IMR-90 (cell line): ENCODE measurements at regions of chr15 and their contacts with region 1.

Region 1: GRCh38 chr15:91852741-91853510 is 582 bp upstream of the SLCO3A1 start:
- DNase-seq: peak; percentile 56
- ATAC-seq: peak; percentile 83
- H3K4me3 ChIP-seq: peak overlapping the region; percentile 90
- H3K27ac ChIP-seq: peak overlapping the region; percentile 53
- H3K4me1 ChIP-seq: peaks cover 5% of the 10 kb centered on the region; the same call in 1 of the 2 replicates
- H3K27me3 ChIP-seq: no peaks in the 10 kb centered on the region; the same call in 1 of the 2 replicates
- CTCF ChIP-seq: peak; percentile 72
- POLR2A ChIP-seq: no peak
- RAD21 ChIP-seq: peak; percentile 52

Region 2: DNA sequence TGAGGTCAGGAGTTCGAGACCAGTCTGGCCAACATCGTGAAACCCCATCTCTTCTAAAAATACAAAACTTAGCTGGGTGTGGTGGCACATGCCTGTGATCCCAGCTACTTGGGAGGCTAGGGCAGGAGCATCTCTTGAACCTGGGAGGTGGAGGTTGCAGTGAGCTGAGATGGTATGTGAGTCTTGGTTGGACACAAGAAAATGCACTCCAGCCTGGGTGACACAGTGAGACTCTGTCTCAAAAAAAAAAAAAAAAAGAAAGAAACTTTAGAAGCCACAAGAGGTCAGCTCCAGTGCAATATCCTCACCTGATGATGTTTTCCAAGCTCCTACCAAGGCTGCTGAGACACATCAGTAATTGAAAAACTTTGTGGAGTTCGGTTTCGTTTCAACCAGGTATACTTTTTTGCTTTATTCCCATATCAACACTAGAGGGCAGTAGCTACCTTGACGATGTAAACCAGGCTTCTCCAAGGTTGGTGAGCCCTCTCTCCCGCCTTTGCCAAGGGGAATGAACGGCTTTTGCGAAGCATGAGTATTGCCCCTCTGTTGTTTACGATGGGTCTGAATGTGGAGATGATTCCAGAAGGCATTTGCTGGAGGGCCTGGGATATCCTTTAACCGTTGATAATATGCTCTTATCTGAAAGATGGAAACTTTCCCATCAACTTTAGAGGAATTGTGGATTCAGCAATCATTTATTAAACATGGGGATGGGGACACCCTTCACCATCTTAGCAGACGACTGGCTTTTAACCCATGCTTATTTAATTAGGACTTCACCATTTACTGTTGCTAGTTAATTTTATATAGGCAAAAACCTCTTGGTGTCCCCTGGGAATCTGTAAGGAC is 550.1 kb before region 1 on chr15:
- CTCF ChIA-PET with region 1: interaction called, 5 read pairs
- POLR2A ChIA-PET with region 1: no interaction called
- dilution Hi-C with region 1: no loop called
- in situ Hi-C with region 1: loop called (anchors 25 kb)
- intact Hi-C with region 1: loop called (anchors 1 kb)
- DNase-seq: peak; percentile 63
- ATAC-seq: peak; percentile 87
- H3K4me3 ChIP-seq: no peak overlapping the region
- H3K27ac ChIP-seq: no peak overlapping the region
- H3K4me1 ChIP-seq: no peaks in the 10 kb centered on the region
- H3K27me3 ChIP-seq: peaks cover 25% of the 10 kb centered on the region
- CTCF ChIP-seq: peak; percentile 84
- POLR2A ChIP-seq: no peak
- RAD21 ChIP-seq: peak; percentile 95

Region 3: DNA sequence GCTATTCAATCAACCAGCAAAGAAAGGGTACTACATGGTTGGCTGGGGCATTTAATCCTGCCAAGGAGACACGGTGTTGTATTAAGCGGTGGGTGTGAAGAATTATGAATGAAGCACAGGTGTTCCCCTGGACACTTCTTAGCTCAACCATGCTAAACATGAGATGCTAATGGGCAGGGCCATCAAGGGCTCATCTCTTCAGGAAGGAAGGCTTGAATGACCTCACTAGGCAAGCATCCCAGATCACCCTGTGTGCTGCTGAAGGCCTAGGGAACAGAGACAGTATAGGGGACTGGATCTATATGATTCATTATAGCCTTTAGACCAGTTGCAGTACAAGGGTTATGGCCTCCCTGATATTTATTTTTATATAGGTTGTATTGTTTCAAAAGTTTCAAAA is 220.8 kb before region 1 on chr15:
- CTCF ChIA-PET with region 1: no interaction called
- POLR2A ChIA-PET with region 1: no interaction called
- dilution Hi-C with region 1: no loop called
- in situ Hi-C with region 1: no loop called
- intact Hi-C with region 1: no loop called
- DNase-seq: no peak
- ATAC-seq: no peak
- H3K4me3 ChIP-seq: no peak overlapping the region
- H3K27ac ChIP-seq: no peak overlapping the region
- H3K4me1 ChIP-seq: no peaks in the 10 kb centered on the region; the same call in 1 of the 2 replicates
- H3K27me3 ChIP-seq: no peaks in the 10 kb centered on the region
- CTCF ChIP-seq: no peak
- POLR2A ChIP-seq: no peak
- RAD21 ChIP-seq: no peak

Region 4: DNA sequence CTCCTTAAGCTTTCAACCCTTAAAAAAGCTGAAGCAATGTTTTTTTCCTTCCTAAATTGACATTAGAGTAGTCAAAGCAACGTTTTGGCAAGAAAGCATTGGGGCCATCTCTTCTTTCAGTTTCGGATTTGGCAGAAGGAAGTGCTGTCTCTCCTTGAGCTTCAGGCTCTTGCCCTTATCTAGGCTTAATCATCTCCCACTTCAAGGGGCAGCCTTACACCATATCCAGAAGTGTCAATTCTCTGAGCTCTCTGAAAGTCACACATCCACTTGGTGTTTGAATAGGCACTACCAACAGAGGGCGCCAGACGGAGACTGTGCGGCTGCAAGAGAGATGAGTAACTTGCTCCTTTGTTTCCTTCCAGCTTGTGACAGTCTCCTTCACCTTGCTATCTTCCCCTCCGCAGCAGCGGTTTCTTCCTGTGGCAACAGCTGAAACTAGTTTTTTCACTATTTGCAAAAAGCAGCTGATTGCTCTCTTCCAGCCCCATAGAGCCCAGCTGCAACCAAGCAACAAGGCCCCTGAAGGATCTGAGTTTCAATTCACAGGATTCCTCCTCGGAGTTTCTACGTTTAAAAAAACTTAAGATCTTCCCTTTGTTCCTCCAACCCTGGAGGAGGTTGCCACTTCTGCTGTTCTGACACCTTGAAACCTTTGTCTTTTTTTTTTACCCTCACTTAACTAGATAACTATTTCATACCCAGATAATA is 146.4 kb before region 1 on chr15:
- CTCF ChIA-PET with region 1: no interaction called
- POLR2A ChIA-PET with region 1: no interaction called
- dilution Hi-C with region 1: no loop called
- in situ Hi-C with region 1: no loop called
- intact Hi-C with region 1: loop called (anchors 5 kb)
- DNase-seq: peak; percentile 63
- ATAC-seq: peak; percentile 72
- H3K4me3 ChIP-seq: no peak overlapping the region
- H3K27ac ChIP-seq: no peak overlapping the region
- H3K4me1 ChIP-seq: no peaks in the 10 kb centered on the region
- H3K27me3 ChIP-seq: no peaks in the 10 kb centered on the region
- CTCF ChIP-seq: peak; percentile 71
- POLR2A ChIP-seq: no peak
- RAD21 ChIP-seq: peak; percentile 62

Region 5: DNA sequence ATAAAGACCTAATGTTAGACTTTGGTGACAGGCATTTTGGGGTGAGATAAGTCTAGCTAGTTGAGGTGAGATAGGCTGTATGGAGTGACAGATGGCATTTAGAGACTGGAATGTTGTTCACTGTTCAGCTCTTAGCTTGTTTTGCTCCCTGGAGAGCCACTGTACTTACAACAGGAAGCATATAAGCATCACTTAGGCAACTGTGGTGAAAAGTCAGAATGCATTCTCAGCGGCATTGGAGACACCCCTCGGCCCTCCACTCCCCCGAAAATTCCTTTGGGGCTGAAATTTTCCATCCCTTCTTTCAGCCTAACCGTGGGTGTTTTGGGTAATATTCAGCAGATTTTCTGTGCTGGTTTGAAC is 74.0 kb after region 1 on chr15:
- CTCF ChIA-PET with region 1: no interaction called
- POLR2A ChIA-PET with region 1: no interaction called
- dilution Hi-C with region 1: no loop called
- in situ Hi-C with region 1: no loop called
- intact Hi-C with region 1: loop called (anchors 5 kb)
- DNase-seq: no peak
- ATAC-seq: peak; percentile 37
- H3K4me3 ChIP-seq: no peak overlapping the region
- H3K27ac ChIP-seq: no peak overlapping the region
- H3K4me1 ChIP-seq: no peaks in the 10 kb centered on the region; the same call in 1 of the 2 replicates
- H3K27me3 ChIP-seq: no peaks in the 10 kb centered on the region
- CTCF ChIP-seq: no peak
- POLR2A ChIP-seq: no peak
- RAD21 ChIP-seq: no peak

Region 6: DNA sequence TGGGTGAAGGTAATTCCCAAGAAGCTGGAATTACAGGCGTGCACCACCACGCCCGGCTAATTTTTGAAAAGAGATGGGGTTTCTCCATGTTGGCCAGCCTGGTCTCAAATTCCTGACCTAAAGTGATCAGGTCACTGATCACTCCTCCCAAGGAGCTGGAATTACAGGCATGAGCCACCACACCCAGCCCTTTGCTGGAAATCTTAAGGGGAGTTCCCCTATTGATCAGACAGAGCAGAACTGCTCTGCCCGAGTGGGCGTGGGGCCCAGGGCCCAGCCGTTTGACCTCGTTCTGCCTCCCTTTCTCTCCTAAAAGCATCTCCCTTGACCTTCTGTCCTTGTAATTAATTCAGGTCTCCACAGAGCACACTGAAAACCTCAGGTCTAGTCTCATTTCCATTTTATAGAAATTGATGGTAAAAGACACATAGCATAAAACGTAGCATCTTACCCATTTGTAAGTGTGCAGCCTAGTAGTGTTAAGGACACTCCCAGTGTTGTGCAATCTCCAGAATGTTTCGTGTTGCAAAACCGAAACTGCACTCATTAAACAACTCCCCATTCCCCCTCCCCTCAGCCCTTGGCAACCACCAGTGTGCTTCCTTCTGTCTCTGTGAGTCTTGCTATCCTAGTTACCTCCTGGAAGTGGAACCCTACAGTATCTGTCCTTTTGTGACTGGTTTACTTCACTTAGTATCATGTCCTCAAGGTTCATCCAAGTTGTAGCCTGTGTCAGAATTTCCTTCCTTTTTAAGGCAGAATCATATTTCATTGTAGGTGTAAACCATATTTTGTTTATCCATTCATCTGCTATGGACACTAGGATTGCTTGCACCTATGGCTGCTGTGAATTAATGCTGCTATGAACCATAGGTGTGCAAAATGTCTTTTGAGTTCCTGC is 90.0 kb after region 1 on chr15:
- CTCF ChIA-PET with region 1: no interaction called
- POLR2A ChIA-PET with region 1: interaction called, 3 read pairs
- dilution Hi-C with region 1: no loop called
- in situ Hi-C with region 1: no loop called
- intact Hi-C with region 1: loop called (anchors 2 kb)
- DNase-seq: peak; percentile 89
- ATAC-seq: peak; percentile 93
- H3K4me3 ChIP-seq: no peak overlapping the region
- H3K27ac ChIP-seq: peak overlapping the region; percentile 21; the same call in 1 of the 2 replicates
- H3K4me1 ChIP-seq: peaks cover 5% of the 10 kb centered on the region; the same call in 1 of the 2 replicates
- H3K27me3 ChIP-seq: no peaks in the 10 kb centered on the region
- CTCF ChIP-seq: no peak
- POLR2A ChIP-seq: no peak
- RAD21 ChIP-seq: no peak

Region 7: GRCh38 chr15:91970142-91970541 is 117.2 kb after region 1 on chr15:
- CTCF ChIA-PET with region 1: no interaction called
- POLR2A ChIA-PET with region 1: no interaction called
- dilution Hi-C with region 1: no loop called
- in situ Hi-C with region 1: no loop called
- intact Hi-C with region 1: loop called (anchors 5 kb)
- DNase-seq: peak; percentile 60
- ATAC-seq: peak; percentile 80
- H3K4me3 ChIP-seq: no peak overlapping the region
- H3K27ac ChIP-seq: no peak overlapping the region
- H3K4me1 ChIP-seq: peaks cover 6% of the 10 kb centered on the region; the same call in 1 of the 2 replicates
- H3K27me3 ChIP-seq: no peaks in the 10 kb centered on the region
- CTCF ChIP-seq: no peak
- POLR2A ChIP-seq: no peak
- RAD21 ChIP-seq: no peak

Region 8: GRCh38 chr15:92069308-92070250 is 216.7 kb after region 1 on chr15:
- CTCF ChIA-PET with region 1: no interaction called
- POLR2A ChIA-PET with region 1: no interaction called
- dilution Hi-C with region 1: no loop called
- in situ Hi-C with region 1: loop called (anchors 5 kb)
- intact Hi-C with region 1: no loop called
- DNase-seq: peak; percentile 80
- ATAC-seq: peak; percentile 95
- H3K4me3 ChIP-seq: no peak overlapping the region
- H3K27ac ChIP-seq: no peak overlapping the region
- H3K4me1 ChIP-seq: peaks cover 2% of the 10 kb centered on the region; the same call in 1 of the 2 replicates
- H3K27me3 ChIP-seq: no peaks in the 10 kb centered on the region
- CTCF ChIP-seq: no peak
- POLR2A ChIP-seq: no peak
- RAD21 ChIP-seq: no peak